GM12878 (cell line): ENCODE measurements at regions of chr3 and their contacts with region 1.

Region 1: GRCh38 chr3:50121416-50122032 is 32.8 kb downstream of the RBM5 start:
- DNase-seq: peak; percentile 16
- ATAC-seq: peak; percentile 95
- H3K4me3 ChIP-seq: no peak overlapping the region
- H3K27ac ChIP-seq: no peak overlapping the region
- H3K4me1 ChIP-seq: no peaks in the 10 kb centered on the region
- H3K27me3 ChIP-seq: no peaks in the 10 kb centered on the region
- CTCF ChIP-seq: peak; percentile 83 to 85 (median 84)
- EP300 ChIP-seq: no peak
- POLR2A ChIP-seq: peak; percentile 72
- RAD21 ChIP-seq: peak; percentile 62

Region 2: GRCh38 chr3:50088725-50089608 is 32.6 kb before region 1 on chr3 and contains the start of gene RBM5:
- CTCF ChIA-PET with region 1: interaction called, 17 read pairs
- POLR2A ChIA-PET with region 1: no interaction called
- RAD21 ChIA-PET with region 1: no interaction called
- SMC1A ChIA-PET with region 1: interaction called, 4 read pairs
- in situ Hi-C with region 1: no loop called
- intact Hi-C with region 1: no loop called
- DNase-seq: peak; percentile 64
- ATAC-seq: peak; percentile 100
- H3K4me3 ChIP-seq: peak within 1 kb of the TSS; percentile 78
- H3K27ac ChIP-seq: peak within 1 kb of the TSS; percentile 99
- H3K4me1 ChIP-seq: no peaks in the 10 kb centered on the region; the same call in 1 of the 2 replicates
- H3K27me3 ChIP-seq: no peaks in the 10 kb centered on the region
- CTCF ChIP-seq: no peak
- EP300 ChIP-seq: no peak
- POLR2A ChIP-seq: peak; percentile 91
- RAD21 ChIP-seq: no peak
- polyA plus RNA-seq, gene RBM5: 35.1 to 48.1 TPM

Region 3: DNA sequence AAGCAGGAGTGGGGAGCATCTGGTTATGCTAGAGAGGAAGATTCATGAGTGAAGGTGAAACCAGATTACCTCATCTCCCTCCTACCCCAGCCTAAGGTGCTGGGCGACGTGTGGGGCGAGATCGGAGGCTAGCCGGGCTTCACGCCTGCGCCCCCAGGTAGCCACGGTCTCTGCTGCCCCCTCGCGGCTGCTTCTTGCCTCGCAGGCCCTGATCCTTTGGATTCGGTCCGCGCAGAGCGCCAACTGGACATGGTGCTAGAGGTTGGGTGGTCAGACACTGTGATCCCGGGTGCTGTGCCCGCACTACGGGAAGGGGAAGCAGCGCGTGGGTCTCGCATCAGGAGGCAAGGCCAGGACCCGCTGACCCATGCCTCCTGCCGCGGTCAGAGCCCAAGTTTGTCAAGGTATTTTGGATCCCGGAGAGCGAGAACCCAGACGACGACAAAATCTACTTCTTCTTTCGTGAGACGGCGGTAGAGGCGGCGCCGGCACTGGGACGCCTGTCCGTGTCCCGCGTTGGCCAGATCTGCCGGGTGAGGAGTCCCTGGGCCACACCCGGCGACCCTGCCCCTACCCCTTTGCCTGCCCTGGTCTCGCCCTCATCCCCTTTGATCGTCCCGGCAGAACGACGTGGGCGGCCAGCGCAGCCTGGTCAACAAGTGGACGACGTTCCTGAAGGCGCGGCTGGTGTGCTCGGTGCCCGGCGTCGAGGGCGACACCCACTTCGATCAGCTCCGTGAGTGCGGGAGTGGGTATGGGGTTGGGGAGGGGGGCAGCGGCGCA is 151.6 kb after region 1 on chr3:
- CTCF ChIA-PET with region 1: interaction called, 6 read pairs
- POLR2A ChIA-PET with region 1: no interaction called
- RAD21 ChIA-PET with region 1: no interaction called
- SMC1A ChIA-PET with region 1: no interaction called
- in situ Hi-C with region 1: loop called (anchors 5 kb)
- intact Hi-C with region 1: loop called (anchors 1 kb)
- DNase-seq: peak; percentile 44
- ATAC-seq: peak; percentile 95
- H3K4me3 ChIP-seq: no peak overlapping the region
- H3K27ac ChIP-seq: no peak overlapping the region
- H3K4me1 ChIP-seq: peaks cover 6% of the 10 kb centered on the region
- H3K27me3 ChIP-seq: peaks cover 7 to 8% of the 10 kb centered on the region in 2 experiments; a peak in 3 of 4 replicates
- CTCF ChIP-seq: peak; percentile 98 to 99 (median 98); a peak in 5 of 6 replicates
- EP300 ChIP-seq: no peak
- POLR2A ChIP-seq: no peak
- RAD21 ChIP-seq: peak; percentile 93

Region 4: DNA sequence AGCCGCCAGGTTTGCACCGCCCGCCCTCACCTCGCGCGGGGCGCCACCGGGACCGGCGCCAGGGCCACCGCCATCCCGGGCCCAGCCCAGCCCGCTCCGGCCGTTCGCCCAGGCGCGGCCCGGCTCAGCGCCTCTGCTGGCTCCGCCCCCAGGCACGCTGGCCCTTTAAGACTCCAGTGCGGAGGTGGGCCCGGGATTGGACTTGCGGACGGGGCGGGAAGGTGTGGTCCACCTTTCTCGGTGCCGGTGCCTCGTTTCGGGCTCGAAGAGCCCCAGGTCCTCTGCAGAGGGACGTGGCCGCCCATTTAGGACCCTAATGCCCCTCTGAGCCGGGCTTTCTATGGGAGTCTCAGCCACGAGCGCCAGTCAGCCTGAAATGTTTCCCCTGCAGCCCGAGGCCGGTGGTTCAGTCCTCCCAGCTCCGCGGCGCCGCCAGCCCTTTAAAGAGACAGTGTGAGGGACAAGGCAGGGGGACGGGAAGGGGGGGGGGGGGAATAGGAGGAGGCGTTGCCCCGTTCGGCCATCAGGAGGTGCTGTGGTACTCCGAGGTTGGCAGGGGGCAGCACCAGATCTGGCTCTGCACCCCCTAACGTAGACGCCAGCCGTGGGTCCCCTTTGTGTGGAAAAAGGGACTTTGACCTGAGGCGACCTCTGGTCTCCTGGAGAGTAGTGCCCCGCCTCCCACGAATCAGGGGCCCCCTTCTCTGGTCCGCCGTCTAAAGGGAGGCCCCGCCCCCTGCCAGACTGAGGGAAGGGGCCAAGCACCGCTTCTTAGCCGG is 200.0 kb after region 1 on chr3:
- CTCF ChIA-PET with region 1: no interaction called
- POLR2A ChIA-PET with region 1: no interaction called
- RAD21 ChIA-PET with region 1: no interaction called
- SMC1A ChIA-PET with region 1: no interaction called
- in situ Hi-C with region 1: no loop called
- intact Hi-C with region 1: no loop called
- DNase-seq: peak; percentile 42
- ATAC-seq: peak; percentile 91
- H3K4me3 ChIP-seq: peak overlapping the region; percentile 70
- H3K27ac ChIP-seq: peak overlapping the region; percentile 88
- H3K4me1 ChIP-seq: peaks cover 22% of the 10 kb centered on the region
- H3K27me3 ChIP-seq: no peaks in the 10 kb centered on the region
- CTCF ChIP-seq: peak; percentile 32 to 68 (median 35); a peak in 5 of 6 replicates
- EP300 ChIP-seq: no peak
- POLR2A ChIP-seq: peak; percentile 56; the same call in 1 of the 2 replicates
- RAD21 ChIP-seq: no peak